ENCODE measurements at regions of chr20 and their contacts with region 1.

Region 1: DNA sequence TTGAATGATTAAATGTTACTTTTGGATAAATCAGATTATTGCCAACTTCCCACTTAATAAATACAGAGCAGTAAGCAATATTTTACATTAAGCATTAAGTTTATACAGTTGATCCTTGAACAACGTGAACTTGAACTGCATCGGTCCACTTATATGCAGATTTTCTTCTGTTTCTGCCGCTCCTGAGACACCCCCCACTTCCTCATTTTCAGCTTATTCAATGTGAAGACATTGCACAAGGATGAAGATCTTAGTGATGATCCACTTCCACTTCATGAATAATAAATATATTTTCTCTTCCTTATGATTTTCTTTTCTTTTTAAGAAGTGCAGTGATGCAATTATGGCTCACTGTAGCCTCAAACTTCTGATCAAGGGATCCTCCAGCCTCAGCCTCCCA is 167.2 kb downstream of the LINC00237 start:
- DNase-seq: no peak
- H3K4me3 Mint-ChIP-seq: no peak overlapping the region
- H3K27ac Mint-ChIP-seq: no peak overlapping the region
- H3K4me1 Mint-ChIP-seq: no peaks in the 10 kb centered on the region
- H3K27me3 Mint-ChIP-seq: peaks cover 6% of the 10 kb centered on the region

Region 2: GRCh38 chr20:20993372-20993771 is 54.4 kb after region 1 on chr20:
- CTCF ChIA-PET with region 1: no interaction called
- intact Hi-C with region 1: loop called (anchors 10 kb)
- DNase-seq: no peak
- H3K4me3 Mint-ChIP-seq: no peak overlapping the region
- H3K27ac Mint-ChIP-seq: no peak overlapping the region
- H3K4me1 Mint-ChIP-seq: no peaks in the 10 kb centered on the region
- H3K27me3 Mint-ChIP-seq: peaks cover 13% of the 10 kb centered on the region

Measured in activated naive CD4-positive, alpha-beta T cell treated with anti-CD3 and anti-CD28 coated beads for 36 hours (primary cell).